Left ventricle myocardium superior (tissue), 1 donor: ENCODE measurements at regions of chr6 and their contacts with region 1.

Region 1: GRCh38 chr6:164897523-164898235 is 411.7 kb downstream of the C6orf118 start:
- DNase-seq: no peak
- ATAC-seq: no peak

Region 2: DNA sequence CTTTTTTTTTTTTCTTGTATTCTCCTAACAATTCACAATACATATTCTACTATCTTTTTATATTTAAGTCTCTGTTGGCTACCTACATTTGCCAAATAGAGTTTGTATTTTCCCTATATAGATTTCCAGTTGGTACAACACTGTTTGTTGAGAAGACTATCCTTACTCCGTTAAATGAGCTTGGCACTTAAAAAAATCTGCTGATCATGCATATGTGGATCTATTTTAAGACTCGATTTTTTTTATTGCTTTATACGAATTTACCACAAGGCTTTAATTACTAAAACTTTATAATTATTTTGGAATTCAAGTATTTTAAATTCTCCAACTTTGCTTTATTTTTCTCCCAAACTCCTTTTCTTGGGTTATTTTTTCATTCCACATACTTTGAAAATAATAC is 443.8 kb before region 1 on chr6:
- intact Hi-C with region 1: loop called (anchors 5 kb)
- DNase-seq: no peak
- ATAC-seq: no peak

Region 3: DNA sequence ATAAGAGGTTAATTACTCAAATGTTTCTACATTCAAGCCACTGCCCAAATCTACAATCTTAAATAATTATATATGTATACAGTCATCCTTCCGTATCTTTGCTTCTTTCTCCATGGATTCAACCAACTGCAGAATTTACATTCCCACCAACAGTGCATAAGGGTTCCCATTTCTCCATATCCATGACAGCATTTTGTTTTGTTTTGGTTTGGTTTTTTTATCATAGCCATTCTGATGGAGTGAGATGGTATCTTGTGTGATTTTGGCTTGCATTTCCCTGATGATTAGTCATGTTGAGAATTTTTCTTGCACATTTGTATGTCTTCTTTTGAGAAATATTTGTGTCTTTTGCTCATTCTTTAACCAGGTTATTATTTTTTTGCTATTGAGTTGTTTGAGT is 213.2 kb after region 1 on chr6:
- intact Hi-C with region 1: no loop called
- DNase-seq: no peak
- ATAC-seq: no peak